ENCODE measurements at regions of chr9 and their contacts with region 1.

Region 1: DNA sequence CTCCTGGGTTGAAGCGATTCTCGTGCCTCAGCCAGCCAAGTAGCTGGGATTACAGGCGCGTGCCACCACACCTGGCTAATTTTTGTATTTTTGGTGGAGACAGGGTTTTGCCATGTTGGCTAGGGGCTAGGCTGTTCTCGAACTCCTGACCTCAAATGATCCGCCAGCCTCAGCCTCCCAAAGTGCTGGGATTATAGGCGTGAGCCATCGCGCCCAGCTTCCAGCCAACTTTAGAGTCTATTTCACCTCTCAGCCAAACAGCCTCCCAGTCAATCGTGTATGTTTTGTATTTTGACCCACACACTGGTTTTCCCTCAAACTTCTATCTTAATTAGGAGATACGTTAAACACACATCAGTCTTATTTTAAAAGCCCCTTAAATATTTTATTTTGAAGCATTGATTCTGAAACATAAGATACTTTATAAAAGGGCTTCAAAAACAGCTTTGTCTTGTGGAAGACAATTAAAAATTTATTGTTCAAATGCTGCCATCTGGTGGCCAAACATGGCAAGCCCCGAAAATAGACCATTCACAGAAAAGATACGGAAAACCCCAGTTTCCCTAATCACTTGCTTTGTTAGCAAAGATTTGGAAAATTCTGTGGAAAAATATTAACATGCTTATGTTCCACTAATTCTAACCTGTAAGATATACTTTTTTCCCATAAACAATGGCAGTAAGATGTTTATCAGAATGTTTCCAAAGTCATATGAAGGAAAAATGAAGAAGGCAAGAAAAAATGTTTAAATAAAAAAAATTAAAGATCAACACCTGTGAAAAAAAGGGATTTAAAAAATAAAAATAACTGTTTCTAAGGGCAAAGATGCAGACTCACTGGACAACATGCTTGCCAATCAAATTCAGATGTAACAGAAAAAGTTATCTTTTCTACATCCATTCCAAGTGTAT is 33.1 kb downstream of the APTX start:
- DNase-seq: no peak
- ATAC-seq: peak in 1 of 2 donors; percentile 41
- H3K4me3 ChIP-seq: no peak overlapping the region
- H3K27ac ChIP-seq: no peak overlapping the region
- H3K4me1 ChIP-seq: no peaks in the 10 kb centered on the region
- H3K27me3 ChIP-seq: no peaks in the 10 kb centered on the region
- CTCF ChIP-seq: peak; percentile 93

Region 2: GRCh38 chr9:32384364-32385151 is 583.8 kb before region 1 on chr9 and contains the start of gene ACO1:
- intact Hi-C with region 1: loop called (anchors 10 kb)
- DNase-seq: peak; percentile 93
- ATAC-seq: peak; percentile 99
- H3K4me3 ChIP-seq: peak within 1 kb of the TSS; percentile 94
- H3K27ac ChIP-seq: peak within 1 kb of the TSS; percentile 85
- H3K4me1 ChIP-seq: peaks cover 30% of the 10 kb centered on the region
- H3K27me3 ChIP-seq: no peaks in the 10 kb centered on the region
- CTCF ChIP-seq: no peak
- total RNA-seq, gene ACO1: 33.6 TPM

Region 3: GRCh38 chr9:32590898-32591297 is 377.5 kb before region 1 on chr9:
- intact Hi-C with region 1: loop called (anchors 10 kb)
- DNase-seq: no peak
- ATAC-seq: no peak
- H3K4me3 ChIP-seq: no peak overlapping the region
- H3K27ac ChIP-seq: no peak overlapping the region
- H3K4me1 ChIP-seq: no peaks in the 10 kb centered on the region
- H3K27me3 ChIP-seq: no peaks in the 10 kb centered on the region
- CTCF ChIP-seq: no peak

Region 4: GRCh38 chr9:32841314-32841713 is 127.0 kb before region 1 on chr9:
- intact Hi-C with region 1: no loop called
- DNase-seq: no peak
- ATAC-seq: no peak
- H3K4me3 ChIP-seq: no peak overlapping the region
- H3K27ac ChIP-seq: no peak overlapping the region
- H3K4me1 ChIP-seq: no peaks in the 10 kb centered on the region
- H3K27me3 ChIP-seq: no peaks in the 10 kb centered on the region
- CTCF ChIP-seq: no peak

Measured in lower lobe of right lung (tissue), 2 donors.